Prostate gland (tissue), 2 donors: ENCODE measurements at regions of chr14 and their contacts with region 1.

Region 1: DNA sequence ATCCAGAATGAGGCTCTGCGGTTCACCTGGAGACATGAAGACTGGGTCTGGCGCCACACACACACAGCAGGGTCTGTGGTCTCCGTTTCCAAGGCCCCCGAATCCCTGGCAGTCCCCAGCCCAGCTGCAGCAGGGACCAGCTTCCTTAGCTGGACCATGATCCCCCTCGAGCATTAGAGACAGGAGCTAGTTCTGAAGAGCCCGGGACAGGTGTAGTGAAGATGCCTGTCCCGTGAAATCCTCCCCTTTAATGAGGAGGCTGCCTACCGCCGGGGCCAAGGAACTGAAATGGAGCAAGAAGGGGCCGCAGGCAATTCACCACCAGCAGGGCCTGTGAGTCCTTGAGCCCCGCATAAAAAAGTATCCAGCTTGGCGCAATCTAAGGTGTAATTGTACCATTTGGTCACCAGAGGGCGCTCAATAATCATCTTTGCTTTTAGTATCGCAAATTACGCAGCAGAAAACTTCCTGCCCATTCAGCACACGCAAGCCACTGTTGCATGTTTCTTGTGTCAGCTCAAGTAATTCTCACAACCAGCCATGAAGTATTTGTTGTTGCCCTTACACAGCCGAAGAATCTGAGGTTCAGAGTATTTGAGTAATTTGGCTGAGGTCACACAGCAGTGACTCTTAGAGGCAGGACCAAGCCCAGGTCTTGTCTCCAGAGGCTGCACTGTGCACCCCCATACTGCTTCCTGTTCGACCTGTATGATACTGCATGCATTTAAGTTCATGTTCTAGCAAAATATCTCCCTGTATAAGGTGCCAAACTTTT is 54.3 kb upstream of the PPP2R5C start:
- DNase-seq: peak; percentile 62
- H3K4me3 ChIP-seq: no peak overlapping the region
- H3K27ac ChIP-seq: no peak overlapping the region
- H3K4me1 ChIP-seq: peaks cover 4% of the 10 kb centered on the region
- H3K27me3 ChIP-seq: peaks cover 3% of the 10 kb centered on the region
- CTCF ChIP-seq: peak; percentile 65 to 91 (median 90)
- POLR2A ChIP-seq: no peak

Region 2: DNA sequence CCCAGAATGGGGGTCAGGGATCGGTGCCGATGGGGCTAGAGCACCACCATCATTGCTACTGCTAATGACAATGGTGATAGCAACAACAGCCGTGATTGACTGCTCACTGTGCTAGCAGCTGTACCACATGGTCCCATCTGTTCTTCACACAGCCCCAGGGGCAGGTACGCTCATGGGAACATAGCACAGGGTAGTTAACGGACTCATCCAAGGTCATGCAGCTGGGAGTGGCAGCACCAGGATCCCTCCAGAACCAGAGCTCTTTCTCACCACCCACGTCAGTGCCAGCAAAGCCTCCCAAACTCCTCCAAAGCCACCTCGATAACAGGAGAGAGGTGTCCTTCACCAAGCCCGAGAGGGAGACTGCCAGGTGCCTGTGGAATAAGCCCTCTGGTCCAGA is 245.9 kb after region 1 on chr14:
- intact Hi-C with region 1: loop called (anchors 10 kb)
- DNase-seq: no peak
- H3K4me3 ChIP-seq: no peak overlapping the region
- H3K27ac ChIP-seq: no peak overlapping the region
- H3K4me1 ChIP-seq: peaks cover 5% of the 10 kb centered on the region
- H3K27me3 ChIP-seq: no peaks in the 10 kb centered on the region
- CTCF ChIP-seq: no peak
- POLR2A ChIP-seq: no peak

Region 3: DNA sequence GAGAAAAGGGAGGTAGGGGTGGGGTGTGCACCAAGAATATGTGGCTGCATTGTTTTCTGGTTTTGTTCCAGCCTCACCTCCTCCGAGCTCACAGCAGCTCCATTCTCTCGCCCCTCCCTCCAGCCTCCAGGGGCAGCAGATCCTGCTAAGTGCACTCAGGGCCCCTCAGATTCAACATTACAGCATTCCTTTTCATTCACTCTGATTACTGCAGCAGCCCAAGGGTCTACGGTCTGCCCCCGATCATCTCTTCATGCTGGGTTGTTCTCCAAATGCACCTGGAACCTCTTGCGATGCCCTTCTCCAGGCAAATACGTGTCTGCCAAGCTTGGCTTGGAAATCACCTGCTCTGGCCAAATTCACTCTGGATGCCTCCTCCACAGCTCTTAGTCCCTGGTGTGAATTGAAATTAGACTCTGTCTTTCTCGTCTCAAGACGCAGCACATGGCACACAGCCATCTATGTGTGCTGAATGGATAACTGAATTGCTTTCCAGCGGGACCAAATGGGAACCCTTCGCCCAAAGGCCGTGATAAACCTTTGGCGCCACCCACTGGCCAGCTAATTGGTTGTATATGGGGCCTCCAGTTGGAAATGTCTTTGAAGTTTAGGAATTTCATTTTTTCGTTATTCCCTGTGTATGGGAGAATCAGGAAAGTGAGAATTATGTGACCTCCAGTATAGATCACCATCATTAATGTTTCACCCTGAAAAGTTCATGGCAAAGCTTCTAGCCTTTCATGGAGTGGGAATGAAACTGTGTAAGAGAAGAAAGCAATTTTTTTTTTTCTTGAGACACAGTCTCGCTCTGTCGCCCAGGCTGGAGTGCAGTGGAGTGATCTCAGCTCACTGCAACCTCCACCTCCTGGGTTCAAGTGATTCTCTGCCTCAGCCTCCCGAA is 389.2 kb after region 1 on chr14:
- intact Hi-C with region 1: loop called (anchors 10 kb)
- DNase-seq: peak; percentile 87
- H3K4me3 ChIP-seq: no peak overlapping the region
- H3K27ac ChIP-seq: no peak overlapping the region
- H3K4me1 ChIP-seq: peaks cover 5% of the 10 kb centered on the region
- H3K27me3 ChIP-seq: no peaks in the 10 kb centered on the region
- CTCF ChIP-seq: peak; percentile 35 to 87 (median 80)
- POLR2A ChIP-seq: no peak